PC-9 (cell line): ENCODE measurements at regions of chr10 and their contacts with region 1.

Region 1: DNA sequence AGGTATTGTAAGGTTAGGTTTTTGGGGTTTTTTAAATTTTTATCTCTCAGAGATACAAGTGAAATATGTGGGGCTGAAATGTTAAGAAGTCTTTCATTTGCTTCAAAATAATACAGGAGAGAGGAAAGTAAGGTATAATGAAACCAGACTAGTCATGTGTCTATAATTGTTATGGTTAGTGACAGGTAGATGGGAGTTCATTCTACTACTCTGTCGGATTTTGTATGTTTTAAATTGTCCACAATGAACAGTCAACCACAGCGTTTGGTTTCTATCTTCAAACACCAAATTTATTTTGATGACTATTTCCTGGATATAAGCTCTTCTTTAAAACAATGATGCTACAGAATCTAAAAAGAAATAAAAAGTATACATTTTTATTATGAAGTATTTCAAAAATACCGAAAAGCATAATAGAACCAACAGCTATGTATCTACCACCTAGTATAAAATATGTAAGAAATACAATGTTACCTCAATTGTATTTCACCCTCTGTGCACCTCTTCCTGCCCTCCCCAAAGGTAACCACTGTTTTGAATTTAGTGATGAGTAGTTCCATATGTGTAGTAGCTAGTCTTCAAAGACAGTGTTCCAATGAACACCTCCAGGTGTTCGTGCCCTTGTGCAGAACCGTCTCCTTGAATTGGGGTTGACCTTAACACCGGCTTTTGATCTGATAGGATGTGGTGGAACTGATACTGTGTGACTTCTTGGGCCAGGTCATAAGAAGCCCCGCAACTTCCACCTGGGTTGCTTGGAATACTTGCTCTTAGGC is 74.8 kb upstream of the CDK1 start:
- DNase-seq: no peak
- H3K4me3 ChIP-seq: no peak overlapping the region
- H3K27ac ChIP-seq: no peak overlapping the region
- H3K4me1 ChIP-seq: no peaks in the 10 kb centered on the region
- H3K27me3 ChIP-seq: no peaks in the 10 kb centered on the region
- CTCF ChIP-seq: no peak

Region 2: DNA sequence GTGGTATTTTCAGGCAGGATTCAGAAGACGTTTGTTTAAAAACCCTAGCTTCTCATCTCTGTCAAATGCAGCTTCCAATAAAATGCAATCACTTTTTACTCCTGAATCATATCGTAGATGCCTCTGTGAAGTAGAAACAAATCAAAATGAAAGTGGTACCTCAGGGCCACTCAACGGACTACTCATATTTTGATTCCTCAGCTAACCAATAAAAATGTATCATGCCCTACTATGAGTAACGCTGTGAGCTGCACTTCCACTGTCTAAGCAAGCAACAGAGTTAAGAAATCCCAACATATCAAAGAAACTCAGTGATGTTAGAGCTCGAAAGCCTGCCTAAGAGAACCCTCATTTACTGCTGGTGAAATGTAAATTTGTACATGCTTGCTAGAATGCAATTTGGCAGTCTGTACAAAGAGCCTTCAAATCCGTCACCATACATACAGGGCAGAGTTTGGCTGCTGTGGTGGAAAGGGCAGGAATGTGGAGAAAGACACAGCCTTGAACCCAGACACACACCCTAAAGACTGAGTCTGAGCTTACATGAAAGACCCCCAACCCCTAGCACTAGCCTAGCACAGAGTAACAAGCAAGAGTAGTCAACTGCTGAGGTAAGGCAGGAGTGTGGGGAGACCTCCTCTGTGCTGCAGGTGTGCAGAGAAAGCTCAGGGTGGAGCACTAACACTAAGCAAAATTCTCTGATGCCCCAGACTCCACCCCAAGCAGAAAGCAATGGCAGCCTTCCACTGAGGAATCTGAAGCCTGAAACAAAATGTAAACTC is 465.3 kb before region 1 on chr10:
- CTCF ChIA-PET with region 1: interaction called, 10 read pairs
- POLR2A ChIA-PET with region 1: no interaction called
- intact Hi-C with region 1: no loop called
- DNase-seq: peak in 1 of 2 experiments; percentile 34
- H3K4me3 ChIP-seq: no peak overlapping the region
- H3K27ac ChIP-seq: no peak overlapping the region
- H3K4me1 ChIP-seq: no peaks in the 10 kb centered on the region
- H3K27me3 ChIP-seq: no peaks in the 10 kb centered on the region
- CTCF ChIP-seq: peak; percentile 53

Region 3: DNA sequence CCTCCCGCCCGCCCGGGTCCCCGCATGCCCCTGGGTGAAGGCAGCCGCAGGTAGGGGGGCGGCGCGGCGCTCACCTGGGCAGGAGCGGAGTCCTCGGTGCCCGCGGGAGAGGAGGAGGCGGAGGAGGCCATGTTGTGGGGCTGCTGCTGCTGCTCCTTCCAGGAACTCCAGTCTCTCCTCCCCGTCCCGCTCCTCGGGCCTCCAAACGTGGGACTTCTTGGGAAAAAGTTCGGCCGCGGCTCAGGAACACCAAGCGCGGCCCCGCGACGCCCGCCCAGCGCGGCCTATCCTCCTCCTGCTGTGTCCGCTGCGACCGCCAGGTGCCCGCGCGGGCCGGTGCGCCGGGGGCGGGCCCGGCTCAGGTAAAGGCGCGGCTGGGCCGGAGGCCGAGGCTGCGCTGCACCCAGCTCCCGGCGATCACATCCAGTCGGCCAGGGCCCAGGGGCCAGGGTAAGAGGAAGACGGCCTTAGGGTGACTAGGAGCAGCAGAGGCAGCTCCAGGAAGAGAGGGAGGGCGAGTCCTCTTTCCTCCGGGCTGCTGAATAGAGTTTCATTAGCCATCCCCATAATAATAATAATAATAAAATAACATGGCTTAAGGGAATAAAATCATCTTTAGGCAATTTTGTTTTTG is 29.9 kb after region 1 on chr10:
- CTCF ChIA-PET with region 1: no interaction called
- POLR2A ChIA-PET with region 1: no interaction called
- intact Hi-C with region 1: no loop called
- DNase-seq: peak; percentile 60 to 80
- H3K4me3 ChIP-seq: peak overlapping the region; percentile 70
- H3K27ac ChIP-seq: no peak overlapping the region
- H3K4me1 ChIP-seq: peaks cover 39% of the 10 kb centered on the region
- H3K27me3 ChIP-seq: no peaks in the 10 kb centered on the region
- CTCF ChIP-seq: peak; percentile 61; the same call in 1 of the 2 replicates